WTC11 (cell line): ENCODE measurements at regions of chr1 and their contacts with region 1.

Region 1: GRCh38 chr1:201709564-201710295 is 119.2 kb upstream of the IPO9 start:
- DNase-seq: peak; percentile 87
- ATAC-seq: peak; percentile 98
- H3K4me3 Mint-ChIP-seq: no peak overlapping the region
- H3K27ac Mint-ChIP-seq: no peak overlapping the region
- H3K4me1 Mint-ChIP-seq: peaks cover 8% of the 10 kb centered on the region
- H3K27me3 Mint-ChIP-seq: no peaks in the 10 kb centered on the region
- CTCF ChIP-seq: peak; percentile 88

Region 2: DNA sequence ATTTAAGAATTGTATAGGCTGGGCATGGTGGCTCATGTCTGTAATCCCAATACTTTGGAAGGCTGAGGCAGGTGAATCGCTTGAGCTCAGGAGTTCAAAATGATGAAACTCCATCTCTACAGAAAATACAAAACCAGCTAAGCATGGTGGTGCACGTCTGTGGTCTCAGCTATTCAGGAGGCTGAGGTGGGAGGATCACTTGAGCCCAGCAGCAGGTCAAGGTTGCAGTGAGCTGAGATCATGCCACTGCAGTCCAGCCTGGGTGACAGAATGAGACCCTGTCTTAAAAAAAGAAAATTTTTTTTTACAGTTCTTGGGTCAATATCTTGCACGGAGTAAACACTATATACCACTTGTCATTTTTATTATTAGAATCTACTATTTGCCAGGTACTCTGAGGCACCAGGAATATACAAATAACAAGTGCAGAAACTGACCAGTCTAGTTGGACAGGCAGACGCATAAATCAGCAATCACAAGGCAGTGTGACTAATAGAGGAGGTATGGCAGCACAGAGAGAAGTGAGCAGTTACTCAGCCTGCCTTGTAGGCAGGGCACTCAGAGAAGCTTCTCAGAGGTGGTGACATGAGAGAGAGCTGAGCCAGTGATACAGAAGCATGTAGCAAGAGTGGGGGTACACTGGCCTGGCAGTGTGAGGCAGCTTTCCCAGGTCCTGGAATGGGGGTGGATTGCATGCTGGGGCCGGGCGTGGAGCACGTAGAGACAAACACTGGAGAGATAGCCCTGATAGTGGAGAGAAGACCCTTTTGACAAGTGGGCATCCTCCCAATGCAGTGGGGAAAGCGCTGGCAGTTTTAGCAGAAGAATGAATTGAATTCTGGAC is 248.7 kb before region 1 on chr1:
- CTCF ChIA-PET with region 1: no interaction called
- POLR2A ChIA-PET with region 1: no interaction called
- DNase-seq: no peak
- ATAC-seq: no peak
- H3K4me3 Mint-ChIP-seq: no peak overlapping the region
- H3K27ac Mint-ChIP-seq: no peak overlapping the region
- H3K4me1 Mint-ChIP-seq: peaks cover 35% of the 10 kb centered on the region
- H3K27me3 Mint-ChIP-seq: no peaks in the 10 kb centered on the region
- CTCF ChIP-seq: no peak

Region 3: DNA sequence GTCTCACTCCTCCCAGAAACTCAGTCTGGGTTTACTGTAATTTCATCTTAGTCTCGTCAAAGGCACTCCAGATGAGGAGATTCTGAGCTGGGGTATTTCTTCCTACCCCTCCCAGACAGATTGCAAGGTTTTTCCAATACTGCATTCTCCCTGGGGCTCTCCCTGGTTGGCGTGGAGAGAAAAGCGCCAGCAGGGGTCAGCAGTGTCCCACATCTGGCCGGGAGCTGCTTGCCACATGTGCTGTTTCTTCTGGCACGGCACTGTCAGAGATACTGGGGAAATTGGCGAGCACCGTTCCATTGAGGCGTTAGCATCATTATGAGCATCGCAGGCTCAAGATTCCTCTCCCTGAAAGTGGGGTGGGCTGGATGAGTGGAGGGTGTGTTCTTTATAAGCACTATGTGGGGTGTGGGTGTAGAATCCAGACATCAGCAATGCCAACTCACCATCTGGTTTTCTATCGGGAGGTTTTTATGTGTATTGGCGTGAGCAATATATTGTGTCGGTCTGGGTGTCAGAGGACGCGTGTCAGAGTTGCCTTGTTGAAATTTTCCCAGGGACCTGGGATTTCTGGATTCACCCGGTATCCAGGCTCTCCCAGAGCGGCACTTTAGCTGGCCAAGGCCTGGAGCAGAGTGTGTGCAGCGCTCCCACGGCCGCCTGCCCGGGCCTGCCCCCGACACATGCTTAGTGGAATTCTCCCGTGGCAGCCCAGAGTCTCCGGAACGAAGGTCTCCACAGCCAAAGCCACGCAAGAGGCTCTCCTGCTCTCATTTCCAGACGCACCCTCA is 178.8 kb before region 1 on chr1:
- CTCF ChIA-PET with region 1: interaction called, 11 read pairs
- POLR2A ChIA-PET with region 1: no interaction called
- DNase-seq: peak; percentile 90
- ATAC-seq: peak; percentile 96
- H3K4me3 Mint-ChIP-seq: no peak overlapping the region
- H3K27ac Mint-ChIP-seq: 0 out of 2 replicates have a peak overlapping the region, but pooled peaks have one; percentile 50
- H3K4me1 Mint-ChIP-seq: peaks cover 23% of the 10 kb centered on the region
- H3K27me3 Mint-ChIP-seq: 0 out of 2 replicates have a peak, but pooled peaks cover under 1% of the 10 kb centered on the region
- CTCF ChIP-seq: peak; percentile 62

Region 4: DNA sequence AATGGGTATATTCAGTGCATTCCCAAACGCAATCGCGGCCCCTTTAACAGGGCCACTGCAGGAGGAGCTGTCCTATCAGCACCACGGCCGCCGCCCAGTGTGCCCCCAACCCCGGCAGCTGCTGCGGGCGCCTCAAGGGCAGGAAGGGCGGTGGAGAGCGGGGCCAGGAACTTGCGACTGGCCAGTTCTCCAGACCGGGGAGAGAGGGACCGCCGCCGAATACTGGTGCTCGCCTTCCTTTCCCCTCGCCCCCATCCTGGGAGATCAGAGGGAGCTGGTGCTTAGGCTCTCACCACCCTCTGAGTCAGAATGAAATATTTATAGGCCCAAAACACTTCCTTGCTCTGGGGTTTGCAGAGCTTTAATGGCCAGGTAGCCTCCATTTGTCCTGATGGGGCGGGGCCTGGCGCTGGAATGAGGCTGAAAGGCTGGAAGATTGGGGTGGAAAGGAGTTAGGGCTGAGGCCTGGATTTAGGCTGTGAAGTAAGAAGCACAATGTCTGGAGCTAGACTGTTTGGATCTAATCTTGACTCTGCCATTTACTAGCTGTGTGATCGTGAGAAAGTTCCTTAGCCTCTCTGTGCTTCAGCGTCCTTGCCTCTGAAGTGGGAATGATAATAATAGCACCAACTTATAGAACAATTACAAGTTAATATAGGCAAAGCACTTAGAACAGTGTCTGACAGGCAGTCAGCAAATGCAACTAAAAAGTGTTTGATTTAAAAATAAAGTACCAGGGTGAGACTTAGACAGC is 95.3 kb before region 1 on chr1:
- CTCF ChIA-PET with region 1: interaction called, 11 read pairs
- POLR2A ChIA-PET with region 1: no interaction called
- DNase-seq: peak; percentile 89
- ATAC-seq: peak; percentile 96
- H3K4me3 Mint-ChIP-seq: peak overlapping the region; percentile 66
- H3K27ac Mint-ChIP-seq: no peak overlapping the region
- H3K4me1 Mint-ChIP-seq: peaks cover 28% of the 10 kb centered on the region
- H3K27me3 Mint-ChIP-seq: peaks cover 4% of the 10 kb centered on the region
- CTCF ChIP-seq: no peak

Region 5: GRCh38 chr1:201655243-201655642 is 54.5 kb before region 1 on chr1:
- CTCF ChIA-PET with region 1: interaction called, 23 read pairs
- POLR2A ChIA-PET with region 1: no interaction called
- DNase-seq: peak; percentile 42
- ATAC-seq: peak; percentile 58
- H3K4me3 Mint-ChIP-seq: no peak overlapping the region
- H3K27ac Mint-ChIP-seq: no peak overlapping the region
- H3K4me1 Mint-ChIP-seq: peaks cover 52% of the 10 kb centered on the region
- H3K27me3 Mint-ChIP-seq: peaks cover 4% of the 10 kb centered on the region
- CTCF ChIP-seq: no peak

Region 6: GRCh38 chr1:201696217-201696761 is 13.4 kb before region 1 on chr1:
- CTCF ChIA-PET with region 1: interaction called, 26 read pairs
- POLR2A ChIA-PET with region 1: no interaction called
- DNase-seq: no peak
- ATAC-seq: no peak
- H3K4me3 Mint-ChIP-seq: no peak overlapping the region
- H3K27ac Mint-ChIP-seq: peak overlapping the region; percentile 34; the same call in 1 of the 2 replicates
- H3K4me1 Mint-ChIP-seq: peaks cover 9% of the 10 kb centered on the region
- H3K27me3 Mint-ChIP-seq: no peaks in the 10 kb centered on the region; the same call in 1 of the 2 replicates
- CTCF ChIP-seq: no peak

Region 7: DNA sequence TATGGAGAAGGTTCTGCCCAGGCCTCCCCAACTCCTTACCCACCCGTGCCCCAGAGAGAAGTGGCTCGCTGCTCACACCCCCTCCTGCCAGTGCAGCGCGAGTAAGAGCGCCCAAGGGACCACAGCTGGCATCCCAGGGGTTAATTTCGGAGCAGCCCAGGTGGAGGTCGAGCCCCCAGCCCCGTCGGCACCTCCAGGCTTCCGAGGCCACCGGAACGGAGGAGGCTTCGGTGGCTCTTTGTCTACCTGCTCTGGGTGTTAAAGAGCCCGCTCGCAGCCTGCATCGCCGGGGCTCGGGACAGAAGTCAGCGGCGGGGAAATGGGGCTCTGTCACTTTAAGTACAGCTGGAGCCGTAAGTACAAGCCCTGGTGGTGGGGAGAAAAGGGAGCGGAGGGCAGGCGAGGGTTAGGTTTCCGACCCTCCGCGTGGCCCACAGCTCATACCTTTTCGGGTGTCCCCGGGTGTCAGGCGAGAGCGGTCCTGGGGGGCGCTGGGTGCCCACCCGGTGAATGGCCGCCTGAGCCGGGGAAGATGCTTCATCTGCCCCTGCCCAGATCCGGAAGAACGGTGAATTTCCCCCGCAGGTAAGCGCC is 29.9 kb after region 1 on chr1:
- CTCF ChIA-PET with region 1: interaction called, 41 read pairs
- POLR2A ChIA-PET with region 1: no interaction called
- DNase-seq: peak; percentile 76
- ATAC-seq: peak; percentile 62
- H3K4me3 Mint-ChIP-seq: peak overlapping the region; percentile 94
- H3K27ac Mint-ChIP-seq: peak overlapping the region; percentile 28; the same call in 1 of the 2 replicates
- H3K4me1 Mint-ChIP-seq: peaks cover 67% of the 10 kb centered on the region
- H3K27me3 Mint-ChIP-seq: no peaks in the 10 kb centered on the region; the same call in none of the 2 replicates
- CTCF ChIP-seq: no peak

Region 8: GRCh38 chr1:201816309-201816854 is 106.7 kb after region 1 on chr1:
- CTCF ChIA-PET with region 1: no interaction called
- POLR2A ChIA-PET with region 1: no interaction called
- DNase-seq: no peak
- ATAC-seq: no peak
- H3K4me3 Mint-ChIP-seq: no peak overlapping the region
- H3K27ac Mint-ChIP-seq: no peak overlapping the region
- H3K4me1 Mint-ChIP-seq: no peaks in the 10 kb centered on the region
- H3K27me3 Mint-ChIP-seq: no peaks in the 10 kb centered on the region
- CTCF ChIP-seq: no peak

Region 9: DNA sequence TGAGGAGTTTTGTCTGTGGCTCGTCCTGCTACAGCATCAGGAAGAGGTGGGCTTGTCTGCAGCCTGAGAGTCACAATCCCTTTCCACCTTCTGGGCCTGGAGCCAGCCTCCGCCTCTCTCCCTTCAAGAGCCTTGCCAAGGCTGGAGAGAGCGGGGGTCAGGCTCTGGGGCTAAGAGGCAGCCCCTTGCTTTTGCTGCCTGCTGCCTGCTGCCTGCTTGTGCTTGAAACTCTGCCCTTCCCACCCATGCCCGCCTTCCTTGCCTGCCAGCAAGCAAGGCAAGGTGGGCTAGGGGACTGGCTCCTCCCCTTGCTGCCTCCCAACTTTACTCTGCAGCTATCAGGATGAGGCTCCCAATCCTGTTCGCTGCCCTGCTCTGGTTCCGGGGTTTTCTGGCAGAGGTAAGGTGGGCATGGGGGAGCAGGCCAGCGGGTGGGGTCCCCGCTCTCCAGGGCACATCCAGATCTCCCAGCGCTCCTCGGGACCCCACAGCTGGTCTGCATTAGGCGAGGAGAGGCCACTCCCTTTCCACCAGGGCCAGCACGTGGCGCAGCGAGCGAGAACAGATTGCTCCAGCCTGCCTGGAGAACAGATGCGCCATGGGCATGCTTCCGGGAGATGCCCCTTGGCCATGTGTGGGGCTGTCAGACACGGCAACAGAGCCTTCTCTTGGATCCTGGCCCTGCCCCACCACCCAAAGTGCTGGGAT is 458.1 kb after region 1 on chr1:
- CTCF ChIA-PET with region 1: no interaction called
- POLR2A ChIA-PET with region 1: no interaction called
- DNase-seq: no peak
- ATAC-seq: peak; percentile 24
- H3K4me3 Mint-ChIP-seq: no peak overlapping the region
- H3K27ac Mint-ChIP-seq: no peak overlapping the region
- H3K4me1 Mint-ChIP-seq: peaks cover 16% of the 10 kb centered on the region
- H3K27me3 Mint-ChIP-seq: no peaks in the 10 kb centered on the region
- CTCF ChIP-seq: no peak